Gastrocnemius medialis (tissue), 4 donors: ENCODE measurements at regions of chr13 and their contacts with region 1.

Region 1: DNA sequence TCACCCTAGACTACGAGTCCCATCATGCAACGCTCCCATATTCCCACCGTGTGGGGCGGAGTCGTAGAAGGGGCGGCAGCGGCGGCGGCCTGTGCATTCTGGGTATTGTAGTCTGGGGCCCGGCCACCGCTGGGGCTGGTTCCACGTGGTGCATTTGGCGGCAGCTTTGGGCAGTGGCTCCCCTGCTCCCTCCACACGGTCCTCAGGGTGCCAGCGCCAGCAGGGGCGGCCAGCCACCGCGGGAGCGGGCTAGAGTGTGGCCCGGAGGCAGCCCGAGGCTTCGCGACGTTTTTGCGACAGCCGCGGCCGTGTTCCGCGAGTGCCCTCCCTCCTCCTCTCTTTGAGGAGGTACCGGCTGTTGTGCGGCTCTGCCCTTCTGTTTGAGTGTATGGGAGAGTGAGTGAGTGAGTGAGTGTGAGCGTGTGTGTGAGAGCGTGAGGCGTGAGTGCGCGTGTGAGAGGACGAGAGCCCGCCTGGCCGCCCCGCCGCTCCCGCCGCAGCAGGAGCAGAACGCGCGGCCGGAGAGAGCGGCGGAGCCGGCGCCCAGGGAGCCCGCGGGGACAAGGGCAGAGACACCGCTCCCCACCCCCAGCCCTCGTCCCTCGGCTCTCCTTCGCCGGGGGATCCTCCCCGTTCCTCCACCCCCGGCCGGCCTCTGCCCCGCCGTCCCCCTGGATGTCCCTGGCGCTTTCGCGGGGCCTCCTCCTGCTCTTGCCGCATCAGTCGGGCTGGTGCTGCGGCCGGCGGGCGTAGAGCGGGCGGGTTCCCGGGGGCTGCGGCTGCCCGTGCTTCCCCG is at the start of gene CDK8:
- DNase-seq: peak; percentile 83 to 94
- ATAC-seq: peak; percentile 90 to 93
- H3K4me3 ChIP-seq: peak within 1 kb of the TSS; percentile 78 to 91 (median 88)
- H3K27ac ChIP-seq: peak within 1 kb of the TSS; percentile 89 to 95 (median 93)
- H3K4me1 ChIP-seq: peaks cover 25 to 35% of the 10 kb centered on the region in 2 donors
- H3K27me3 ChIP-seq: no peaks in the 10 kb centered on the region
- CTCF ChIP-seq: no peak
- POLR2A ChIP-seq: peak; percentile 74 to 81
- total RNA-seq, gene CDK8: 9.4 to 11.0 (median 10.3) TPM

Region 2: DNA sequence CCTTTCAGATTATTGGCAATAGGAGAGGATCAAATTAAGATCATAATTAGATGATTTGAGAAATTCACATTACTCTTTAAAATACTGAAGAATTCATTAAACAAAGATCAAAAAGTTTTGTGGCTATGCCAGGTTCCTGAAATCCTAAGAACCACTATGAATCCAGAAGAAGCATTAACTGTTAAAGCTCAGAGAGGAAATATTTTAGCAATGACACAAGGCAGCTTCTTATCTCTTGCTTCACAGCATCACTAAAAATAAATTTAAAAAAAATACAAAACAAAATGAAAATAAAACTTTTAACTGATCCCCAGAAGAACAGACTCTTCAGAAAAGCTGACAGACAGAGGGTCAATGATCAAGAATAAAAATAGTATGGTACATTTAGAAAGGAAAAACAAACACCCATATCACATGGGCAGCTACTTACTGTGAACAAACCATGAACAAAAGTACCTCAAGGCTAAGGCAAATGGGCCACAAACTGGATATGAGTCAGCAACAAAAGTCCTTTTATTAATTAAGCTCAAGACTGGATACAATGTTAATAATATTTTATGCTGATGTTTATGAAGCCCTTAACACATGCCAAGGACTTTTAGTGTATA is 51.5 kb before region 1 on chr13:
- in situ Hi-C with region 1: no loop called
- intact Hi-C with region 1: no loop called
- DNase-seq: no peak
- ATAC-seq: peak in 1 of 2 donors; percentile 56
- H3K4me3 ChIP-seq: no peak overlapping the region
- H3K27ac ChIP-seq: peak overlapping the region; percentile 40 to 64 (median 52)
- H3K4me1 ChIP-seq: peaks cover 12 to 17% of the 10 kb centered on the region in 2 donors
- H3K27me3 ChIP-seq: no peaks in the 10 kb centered on the region
- CTCF ChIP-seq: no peak
- POLR2A ChIP-seq: no peak

Region 3: DNA sequence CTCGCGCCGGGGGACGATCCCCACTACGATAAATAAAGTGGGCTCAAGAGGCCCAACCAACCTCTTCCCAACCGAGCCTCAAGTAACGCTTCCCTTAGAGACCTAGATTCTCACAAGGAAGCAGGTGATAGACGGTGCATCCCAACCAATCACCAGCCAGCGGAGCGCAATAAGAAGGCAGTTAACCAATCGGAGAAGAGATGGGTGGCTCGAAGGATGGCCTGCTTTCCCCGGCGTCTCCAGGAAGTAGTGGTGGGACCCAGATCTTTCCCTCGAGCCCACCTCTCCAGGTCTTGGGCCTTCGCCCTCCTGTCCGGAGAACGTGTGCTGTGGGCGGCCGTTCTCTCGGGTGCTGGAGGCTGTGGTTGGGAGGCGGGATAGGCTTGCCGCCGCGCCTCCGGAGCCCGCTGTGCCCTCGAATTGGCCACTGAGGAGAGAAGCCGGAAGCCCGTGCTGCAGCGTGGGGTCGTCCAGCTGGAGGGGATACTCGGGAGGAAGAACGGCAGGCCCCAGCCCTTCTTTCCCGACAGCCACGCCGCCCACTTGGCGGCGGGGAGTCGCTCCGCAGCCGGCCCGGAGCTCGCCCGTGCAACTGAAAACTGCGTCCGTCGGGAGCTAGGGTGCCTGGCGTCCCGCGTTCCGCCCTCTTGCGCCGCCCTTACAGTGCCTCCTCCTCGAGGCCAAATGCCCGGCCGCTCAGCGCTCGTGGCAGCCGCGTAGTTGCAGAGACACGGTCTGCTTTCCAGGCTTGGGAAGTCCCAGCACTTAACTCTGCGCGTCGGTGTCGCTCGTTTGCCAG is 32.1 kb before region 1 on chr13 and contains the start of gene RNF6:
- in situ Hi-C with region 1: no loop called
- intact Hi-C with region 1: loop called (anchors 1 kb)
- DNase-seq: peak; percentile 94 to 96
- ATAC-seq: peak; percentile 99
- H3K4me3 ChIP-seq: peak within 1 kb of the TSS; percentile 89 to 100 (median 94)
- H3K27ac ChIP-seq: peak within 1 kb of the TSS; percentile 93 to 99 (median 96)
- H3K4me1 ChIP-seq: peaks cover 15 to 24% of the 10 kb centered on the region in 2 donors
- H3K27me3 ChIP-seq: no peaks in the 10 kb centered on the region
- CTCF ChIP-seq: peak in 2 of 5 experiments; percentile 24 to 25
- POLR2A ChIP-seq: peak; percentile 63 to 67
- total RNA-seq, gene RNF6: 28.6 to 36.1 (median 32.2) TPM

Region 4: GRCh38 chr13:26325876-26326275 is 71.9 kb after region 1 on chr13:
- in situ Hi-C with region 1: no loop called
- intact Hi-C with region 1: loop called (anchors 1 kb)
- DNase-seq: no peak
- ATAC-seq: peak; percentile 58 to 63
- H3K4me3 ChIP-seq: no peak overlapping the region
- H3K27ac ChIP-seq: peak overlapping the region; percentile 75 to 79 (median 78)
- H3K4me1 ChIP-seq: peaks cover 49 to 61% of the 10 kb centered on the region in 2 donors
- H3K27me3 ChIP-seq: no peaks in the 10 kb centered on the region
- CTCF ChIP-seq: no peak
- POLR2A ChIP-seq: no peak

Region 5: GRCh38 chr13:26557393-26558023 is 303.5 kb after region 1 on chr13 and contains the start of gene WASF3:
- in situ Hi-C with region 1: no loop called
- intact Hi-C with region 1: loop called (anchors 10 kb)
- DNase-seq: peak; percentile 90 to 92
- ATAC-seq: peak; percentile 92 to 93
- H3K4me3 ChIP-seq: peak within 1 kb of the TSS; percentile 60 to 73 (median 70)
- H3K27ac ChIP-seq: peak within 1 kb of the TSS; percentile 9 to 69 (median 57)
- H3K4me1 ChIP-seq: peaks cover 0 to 12% of the 10 kb centered on the region in 2 donors
- H3K27me3 ChIP-seq: peaks cover 0 to 3% (median 0%) of the 10 kb centered on the region in 3 donors
- CTCF ChIP-seq: no peak
- POLR2A ChIP-seq: peak; percentile 55 to 60
- total RNA-seq, gene WASF3: 5.4 to 11.6 (median 7.6) TPM

Region 6: GRCh38 chr13:26771796-26772195 is 517.8 kb after region 1 on chr13:
- in situ Hi-C with region 1: no loop called
- intact Hi-C with region 1: no loop called
- DNase-seq: no peak
- ATAC-seq: no peak
- H3K4me3 ChIP-seq: no peak overlapping the region
- H3K27ac ChIP-seq: no peak overlapping the region
- H3K4me1 ChIP-seq: no peaks in the 10 kb centered on the region
- H3K27me3 ChIP-seq: no peaks in the 10 kb centered on the region
- CTCF ChIP-seq: no peak
- POLR2A ChIP-seq: no peak